IMR-90 (cell line): ENCODE measurements at regions of chr13 and their contacts with region 1.

Region 1: GRCh38 chr13:27362064-27362883 is 62.1 kb upstream of the GTF3A start:
- DNase-seq: peak; percentile 71
- ATAC-seq: peak; percentile 97
- H3K4me3 ChIP-seq: peak overlapping the region; percentile 61
- H3K27ac ChIP-seq: peak overlapping the region; percentile 38; the same call in 1 of the 2 replicates
- H3K4me1 ChIP-seq: peaks cover 4% of the 10 kb centered on the region; the same call in 1 of the 2 replicates
- H3K27me3 ChIP-seq: peaks cover 12% of the 10 kb centered on the region
- CTCF ChIP-seq: peak; percentile 95
- POLR2A ChIP-seq: no peak
- RAD21 ChIP-seq: peak; percentile 95

Region 2: DNA sequence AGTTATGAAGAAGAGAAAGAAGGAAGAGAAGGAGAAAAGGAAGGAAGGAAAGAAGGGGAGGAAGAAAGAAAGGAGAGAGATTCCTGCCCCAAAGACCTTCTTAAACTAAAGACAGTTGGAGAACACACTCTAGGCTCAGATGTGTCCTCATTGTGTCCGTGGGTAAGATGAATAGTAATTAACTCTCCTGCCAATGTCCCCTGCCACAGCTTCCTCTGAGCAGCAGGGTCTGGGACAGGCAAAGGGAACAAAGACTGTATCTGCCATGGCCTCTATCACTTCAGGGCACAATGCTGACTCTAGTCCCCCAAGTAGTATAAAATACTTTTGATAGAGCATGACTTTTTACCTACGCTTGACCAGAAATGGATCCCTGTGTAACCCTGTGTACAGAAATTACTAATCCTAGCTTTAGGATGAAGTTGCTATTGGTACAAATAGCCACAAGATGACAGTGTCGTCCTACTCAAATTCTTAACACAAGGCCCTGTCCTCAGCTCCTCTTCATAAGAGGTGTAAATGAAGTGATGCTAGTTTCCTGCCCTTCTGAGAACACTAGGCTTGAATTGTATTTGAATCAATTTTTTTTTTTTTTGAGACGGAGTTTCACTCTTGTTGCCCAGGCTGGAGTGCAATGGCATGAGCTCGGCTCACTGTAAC is 415.5 kb before region 1 on chr13:
- CTCF ChIA-PET with region 1: interaction called, 52 read pairs
- POLR2A ChIA-PET with region 1: no interaction called
- dilution Hi-C with region 1: no loop called
- in situ Hi-C with region 1: loop called (anchors 5 kb)
- intact Hi-C with region 1: loop called (anchors 1 kb)
- DNase-seq: peak; percentile 73
- ATAC-seq: peak; percentile 97
- H3K4me3 ChIP-seq: no peak overlapping the region
- H3K27ac ChIP-seq: no peak overlapping the region
- H3K4me1 ChIP-seq: peaks cover 3% of the 10 kb centered on the region; the same call in 1 of the 2 replicates
- H3K27me3 ChIP-seq: peaks cover 13% of the 10 kb centered on the region
- CTCF ChIP-seq: peak; percentile 93
- POLR2A ChIP-seq: 0 out of 2 replicates have a peak, but pooled peaks have one; percentile 31
- RAD21 ChIP-seq: peak; percentile 95

Region 3: DNA sequence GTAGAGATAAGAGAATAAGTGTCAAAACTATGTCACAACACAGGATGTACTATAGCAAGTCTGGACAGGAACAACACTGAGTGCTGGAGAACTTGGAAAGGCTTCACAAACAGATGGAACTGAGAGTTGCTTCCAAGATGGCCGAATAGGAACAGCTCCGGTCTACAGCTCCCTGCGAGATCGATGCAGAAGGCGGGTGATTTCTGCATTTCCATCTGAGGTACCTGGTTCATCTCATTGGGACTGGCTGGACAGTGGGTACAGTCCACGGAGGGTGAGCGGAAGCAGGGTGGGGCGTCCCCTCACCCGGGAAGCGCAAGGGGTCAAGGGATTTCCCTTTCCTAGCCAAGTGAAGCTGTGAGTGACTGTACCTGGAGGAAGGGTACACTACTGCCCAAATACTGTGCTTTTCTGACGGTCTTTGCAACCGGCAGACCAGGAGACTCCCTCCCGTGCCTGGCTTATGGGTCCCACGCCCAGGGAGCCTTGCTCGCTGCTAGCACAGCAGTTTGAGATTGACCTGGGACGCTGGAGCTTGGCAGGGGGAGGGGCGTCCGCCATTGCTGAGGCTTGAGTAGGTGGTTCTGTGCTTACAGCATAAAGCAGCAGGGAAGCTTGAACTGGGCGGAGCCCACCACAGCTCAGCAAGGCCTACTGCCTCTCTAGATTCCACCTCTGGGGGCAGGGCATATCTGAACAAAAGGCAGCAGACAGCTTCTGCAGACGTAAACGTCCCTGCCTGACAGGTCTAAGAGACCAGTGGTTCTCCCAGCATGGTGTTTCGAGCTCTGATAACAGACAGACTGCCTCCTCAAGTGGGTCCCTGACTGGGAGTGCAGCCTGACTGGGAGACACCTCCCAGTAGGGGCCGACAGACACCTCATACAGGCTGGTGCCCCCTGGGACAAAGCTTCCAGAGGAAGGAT is 236.7 kb before region 1 on chr13:
- CTCF ChIA-PET with region 1: no interaction called
- POLR2A ChIA-PET with region 1: no interaction called
- dilution Hi-C with region 1: no loop called
- in situ Hi-C with region 1: no loop called
- intact Hi-C with region 1: loop called (anchors 5 kb)
- DNase-seq: no peak
- ATAC-seq: no peak
- H3K4me3 ChIP-seq: no peak overlapping the region
- H3K27ac ChIP-seq: no peak overlapping the region
- H3K4me1 ChIP-seq: peaks cover 14% of the 10 kb centered on the region
- H3K27me3 ChIP-seq: no peaks in the 10 kb centered on the region
- CTCF ChIP-seq: no peak
- POLR2A ChIP-seq: no peak
- RAD21 ChIP-seq: no peak

Region 4: DNA sequence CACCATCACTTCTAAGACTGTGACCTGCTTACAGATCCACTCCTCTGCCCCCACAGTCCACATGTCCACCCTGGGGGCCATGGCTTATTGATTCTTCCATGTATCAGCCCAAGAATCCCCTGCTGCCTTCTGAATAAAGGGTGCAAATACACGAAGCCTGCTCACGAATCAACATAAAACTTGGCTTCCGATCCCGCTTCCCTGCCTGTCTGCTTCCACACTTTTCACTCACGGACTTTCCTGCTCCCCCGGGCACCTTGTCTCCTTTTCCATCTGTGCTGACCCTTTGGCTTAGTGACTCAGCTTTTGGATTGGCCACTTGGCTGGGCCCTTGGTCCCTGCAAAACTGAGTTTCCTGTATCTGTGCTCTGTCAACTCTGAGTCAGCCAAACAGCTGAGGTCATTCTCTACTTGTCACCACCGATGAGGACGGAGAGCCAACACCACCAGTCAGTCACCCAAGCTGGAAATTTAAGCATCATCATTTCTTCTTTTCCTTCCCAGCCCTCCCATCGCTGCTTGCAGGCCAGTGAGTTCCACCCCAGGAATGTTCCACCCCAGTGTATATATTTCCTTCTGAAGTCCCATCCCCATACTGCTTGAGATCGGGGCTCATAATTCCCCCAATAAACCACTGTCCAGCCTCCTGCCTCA is 179.3 kb before region 1 on chr13:
- CTCF ChIA-PET with region 1: no interaction called
- POLR2A ChIA-PET with region 1: no interaction called
- dilution Hi-C with region 1: no loop called
- in situ Hi-C with region 1: loop called (anchors 10 kb)
- intact Hi-C with region 1: no loop called
- DNase-seq: peak; percentile 95
- ATAC-seq: peak; percentile 92
- H3K4me3 ChIP-seq: no peak overlapping the region
- H3K27ac ChIP-seq: peak overlapping the region; percentile 58
- H3K4me1 ChIP-seq: peaks cover 3% of the 10 kb centered on the region
- H3K27me3 ChIP-seq: no peaks in the 10 kb centered on the region
- CTCF ChIP-seq: no peak
- POLR2A ChIP-seq: no peak
- RAD21 ChIP-seq: no peak; the same call in none of the 2 replicates

Region 5: DNA sequence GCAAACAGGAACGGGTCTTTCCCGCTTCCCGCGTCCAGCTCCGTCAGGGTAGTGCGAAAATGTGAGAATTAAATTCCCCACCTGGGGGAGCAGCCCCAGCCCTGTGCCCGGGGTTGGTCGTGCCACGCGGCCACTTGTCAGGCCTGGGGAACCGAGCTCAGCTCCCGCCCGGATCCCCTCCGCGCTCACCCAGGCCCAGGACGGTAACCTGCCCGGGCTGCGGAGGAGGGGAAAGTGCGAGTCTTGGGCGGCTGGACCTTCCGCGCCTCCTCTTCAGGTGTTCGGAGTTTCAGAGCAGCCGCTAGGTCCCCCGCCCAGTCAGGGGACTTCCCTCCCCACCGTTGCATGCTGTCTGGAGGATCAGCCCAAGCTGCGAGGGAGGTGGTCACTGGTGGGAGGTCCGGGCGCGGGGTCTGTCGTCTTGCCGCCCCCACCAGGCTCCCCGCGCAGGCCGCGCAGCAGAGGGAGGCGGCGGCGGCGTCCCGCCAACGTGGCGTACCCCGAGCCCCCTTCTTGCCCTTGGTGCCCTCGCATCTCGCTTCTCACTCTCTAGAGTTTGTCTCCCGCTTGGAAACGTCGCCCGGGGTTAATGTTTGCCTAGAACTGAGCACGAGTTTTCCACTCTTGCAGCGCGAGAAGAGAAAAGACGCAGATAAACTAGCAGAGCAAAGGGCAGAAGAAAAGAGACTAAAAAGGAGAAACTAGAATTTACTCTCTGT is 618.2 kb after region 1 on chr13:
- CTCF ChIA-PET with region 1: interaction called, 7 read pairs
- POLR2A ChIA-PET with region 1: no interaction called
- dilution Hi-C with region 1: no loop called
- in situ Hi-C with region 1: loop called (anchors 10 kb)
- intact Hi-C with region 1: loop called (anchors 1 kb)
- DNase-seq: no peak
- ATAC-seq: no peak
- H3K4me3 ChIP-seq: no peak overlapping the region
- H3K27ac ChIP-seq: no peak overlapping the region
- H3K4me1 ChIP-seq: no peaks in the 10 kb centered on the region; the same call in 1 of the 2 replicates
- H3K27me3 ChIP-seq: peaks cover 77% of the 10 kb centered on the region
- CTCF ChIP-seq: no peak
- POLR2A ChIP-seq: no peak
- RAD21 ChIP-seq: no peak